Dorsolateral prefrontal cortex (tissue), 120 donors: ENCODE measurements at regions of chr11 and their contacts with region 1.

Region 1: DNA sequence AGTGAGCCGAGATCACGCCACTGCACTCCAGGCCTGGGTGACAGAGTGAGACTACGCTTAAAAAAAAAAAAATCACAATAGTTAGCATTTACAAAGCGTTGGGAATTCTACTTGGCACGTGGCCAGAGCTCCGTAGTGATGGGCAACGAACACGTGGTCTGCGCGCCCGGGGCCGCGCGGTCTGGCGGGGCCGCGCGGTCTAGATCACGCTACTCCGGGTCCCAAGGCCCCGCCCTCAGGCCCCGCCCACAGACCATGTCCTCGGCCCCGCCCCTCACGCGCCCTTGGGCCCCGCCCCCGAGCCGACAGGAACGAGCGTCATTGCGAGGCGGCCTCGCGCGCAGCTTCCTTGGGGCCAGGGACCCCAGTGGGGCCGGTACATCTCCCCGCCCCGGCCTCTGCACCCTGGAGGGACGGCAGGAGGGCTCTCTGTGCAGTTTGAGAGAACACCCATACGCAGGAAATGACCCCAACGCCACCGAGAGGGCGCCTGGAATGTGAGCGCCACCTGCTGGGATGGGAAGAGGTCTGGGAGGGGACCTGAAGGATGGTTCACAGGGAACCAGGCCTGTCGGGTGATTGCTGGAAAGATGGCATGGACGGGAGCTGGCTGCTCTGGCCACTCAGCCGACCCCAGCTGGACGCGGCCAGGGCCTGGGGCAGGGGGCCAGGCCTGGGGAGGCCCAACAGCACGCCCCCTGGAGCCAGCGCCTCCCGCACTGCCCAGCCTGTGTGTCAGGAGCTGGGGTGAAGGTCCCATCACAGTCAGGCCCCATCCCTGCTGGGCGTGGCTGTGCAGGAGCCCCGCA is 2.0 kb upstream of the PTDSS2 start:
- DNase-seq: peak; percentile 90 to 95 (median 94)
- H3K4me3 ChIP-seq: peak overlapping the region; percentile 56 to 100 (median 78)
- H3K27ac ChIP-seq: peak overlapping the region; percentile 45 to 99 (median 96)
- H3K27me3 ChIP-seq: peaks cover 0 to 5% (median 0%) of the 10 kb centered on the region in 45 donors
- CTCF ChIP-seq: peak; percentile 45 to 94 (median 89)

Region 2: GRCh38 chr11:207208-207862 is 240.8 kb before region 1 on chr11 and contains the starts of genes BET1L and RIC8A:
- intact Hi-C with region 1: loop called in 1 of 2 experiments (anchors 5 kb)
- DNase-seq: peak; percentile 91 to 99 (median 98)
- H3K4me3 ChIP-seq: peak within 1 kb of the TSS; percentile 53 to 100 (median 96)
- H3K27ac ChIP-seq: peak within 1 kb of the TSS; percentile 71 to 99 (median 95)
- H3K27me3 ChIP-seq: no peaks in the 10 kb centered on the region
- CTCF ChIP-seq: peak in 36 of 56 donors; percentile 10 to 59 (median 28)
- total RNA-seq, gene BET1L: 22.9 to 47.4 (median 33.0) TPM
- total RNA-seq, gene RIC8A: 55.0 to 104 (median 78.7) TPM

Region 3: DNA sequence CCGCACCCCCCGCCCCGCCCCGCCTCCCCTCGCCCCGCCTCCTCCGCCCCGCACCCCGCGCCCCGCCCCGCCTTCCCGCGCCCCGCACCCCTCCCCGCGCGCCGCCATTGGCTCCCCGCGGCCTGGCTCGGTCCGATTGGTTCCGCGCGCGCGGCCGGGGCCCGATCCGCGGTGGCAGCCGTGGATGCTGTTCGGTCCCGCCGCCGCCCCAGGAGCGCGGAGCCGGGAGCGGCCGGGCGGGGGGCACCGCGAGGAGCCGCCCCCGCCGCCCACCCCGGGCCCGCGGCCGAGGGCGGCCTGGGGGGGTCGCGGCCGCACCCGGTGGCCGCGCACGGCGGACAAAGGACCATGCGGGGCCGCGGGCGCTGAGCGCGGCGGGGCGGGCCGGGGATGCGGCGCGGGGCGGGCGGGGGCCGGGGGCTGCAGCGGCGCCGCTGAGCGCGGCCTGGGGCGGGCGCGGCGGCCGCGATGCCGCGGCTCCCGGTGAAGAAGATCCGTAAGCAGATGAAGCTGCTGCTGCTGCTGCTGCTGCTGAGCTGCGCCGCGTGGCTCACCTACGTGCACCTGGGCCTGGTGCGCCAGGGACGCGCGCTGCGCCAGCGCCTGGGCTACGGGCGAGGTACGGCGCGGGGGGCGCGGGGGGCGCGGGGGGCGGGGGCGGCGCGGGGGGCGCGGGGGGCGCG is 78.7 kb before region 1 on chr11 and contains the start of gene B4GALNT4:
- intact Hi-C with region 1: loop called in 1 of 2 experiments (anchors 5 kb)
- DNase-seq: peak in 9 of 10 donors; percentile 57 to 84 (median 69)
- H3K4me3 ChIP-seq: peak within 1 kb of the TSS; percentile 35 to 78 (median 62)
- H3K27ac ChIP-seq: peak within 1 kb of the TSS in 52 of 59 donors; percentile 1 to 97 (median 77)
- H3K27me3 ChIP-seq: no peaks in the 10 kb centered on the region
- CTCF ChIP-seq: no peak
- total RNA-seq, gene B4GALNT4: 81.4 to 330 (median 132) TPM

Region 4: GRCh38 chr11:396948-397548 is 51.1 kb before region 1 on chr11:
- intact Hi-C with region 1: no loop called
- DNase-seq: peak in 9 of 10 donors; percentile 48 to 78 (median 64)
- H3K4me3 ChIP-seq: peak overlapping the region in 56 of 59 donors; percentile 13 to 68 (median 52)
- H3K27ac ChIP-seq: peak overlapping the region in 8 of 59 donors; percentile 23 to 70 (median 40)
- H3K27me3 ChIP-seq: peaks cover 0 to 9% (median 0%) of the 10 kb centered on the region in 45 donors
- CTCF ChIP-seq: peak in 52 of 56 donors; percentile 17 to 76 (median 58)

Region 5: GRCh38 chr11:406978-407739 is 41.0 kb before region 1 on chr11:
- intact Hi-C with region 1: loop called (anchors 2 to 5 kb)
- DNase-seq: no peak
- H3K4me3 ChIP-seq: peak overlapping the region; percentile 42 to 80 (median 68)
- H3K27ac ChIP-seq: peak overlapping the region in 43 of 59 donors; percentile 9 to 86 (median 58)
- H3K27me3 ChIP-seq: peaks cover 0 to 11% (median 0%) of the 10 kb centered on the region in 45 donors
- CTCF ChIP-seq: peak in 6 of 56 donors; percentile 0 to 9 (median 2)

Region 6: DNA sequence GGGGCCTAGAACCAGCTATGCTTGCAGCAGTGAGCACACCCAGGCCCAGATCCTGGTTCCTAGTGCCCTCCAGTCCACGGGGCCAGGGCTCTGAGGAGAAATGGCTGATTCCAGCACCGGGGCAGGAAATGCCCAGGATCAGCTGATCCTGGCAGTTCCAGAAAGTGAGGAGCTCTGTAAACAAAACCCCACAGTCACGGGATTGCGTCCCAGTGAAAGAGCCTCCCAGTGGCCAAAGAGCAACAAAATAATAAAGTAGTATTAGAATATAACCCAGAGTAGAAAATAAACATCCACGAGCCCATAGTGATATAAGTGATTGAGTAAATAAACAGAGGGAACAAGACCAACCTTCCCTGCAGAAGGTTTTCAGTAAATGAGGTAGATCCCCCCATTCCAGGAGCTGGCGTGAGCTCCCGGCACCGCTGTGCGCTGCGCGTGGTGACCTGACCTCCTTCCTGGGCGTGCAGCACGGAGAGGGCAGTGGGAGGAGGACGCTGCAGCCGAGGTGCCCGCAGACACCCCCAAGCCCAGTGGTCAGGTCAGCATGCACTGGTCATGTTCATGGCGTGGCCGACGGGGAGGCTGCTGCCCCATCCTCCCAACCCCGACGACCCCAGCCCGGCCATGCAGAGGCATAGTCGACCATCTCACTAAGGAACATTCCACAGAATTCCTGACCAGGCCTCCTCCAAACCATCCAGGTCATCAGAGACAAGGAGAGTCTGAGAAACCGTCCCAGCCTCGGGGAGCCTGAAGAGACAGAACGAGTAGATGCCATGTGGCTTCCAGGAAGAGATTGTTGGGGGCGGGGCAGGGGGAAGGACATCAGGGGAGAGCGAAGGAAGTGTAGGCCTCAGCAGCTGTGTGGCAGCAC is 21.8 kb after region 1 on chr11:
- intact Hi-C with region 1: loop called (anchors 2 kb)
- DNase-seq: peak in 9 of 10 donors; percentile 56 to 88 (median 81)
- H3K4me3 ChIP-seq: peak overlapping the region; percentile 23 to 68 (median 49)
- H3K27ac ChIP-seq: peak overlapping the region; percentile 93 to 100 (median 99)
- H3K27me3 ChIP-seq: no peaks in the 10 kb centered on the region
- CTCF ChIP-seq: peak in 51 of 56 donors; percentile 21 to 69 (median 46)

Region 7: GRCh38 chr11:830295-831117 is 382.4 kb after region 1 on chr11:
- intact Hi-C with region 1: no loop called
- DNase-seq: peak in 1 of 10 donors; percentile 74
- H3K4me3 ChIP-seq: peak overlapping the region in 48 of 59 donors; percentile 4 to 61 (median 34)
- H3K27ac ChIP-seq: peak overlapping the region in 1 of 59 donors; percentile 68
- H3K27me3 ChIP-seq: peaks cover 0 to 85% (median 42%) of the 10 kb centered on the region in 45 donors
- CTCF ChIP-seq: no peak